A549 (cell line): ENCODE measurements at regions of chr9 and their contacts with region 1.

Region 1: DNA sequence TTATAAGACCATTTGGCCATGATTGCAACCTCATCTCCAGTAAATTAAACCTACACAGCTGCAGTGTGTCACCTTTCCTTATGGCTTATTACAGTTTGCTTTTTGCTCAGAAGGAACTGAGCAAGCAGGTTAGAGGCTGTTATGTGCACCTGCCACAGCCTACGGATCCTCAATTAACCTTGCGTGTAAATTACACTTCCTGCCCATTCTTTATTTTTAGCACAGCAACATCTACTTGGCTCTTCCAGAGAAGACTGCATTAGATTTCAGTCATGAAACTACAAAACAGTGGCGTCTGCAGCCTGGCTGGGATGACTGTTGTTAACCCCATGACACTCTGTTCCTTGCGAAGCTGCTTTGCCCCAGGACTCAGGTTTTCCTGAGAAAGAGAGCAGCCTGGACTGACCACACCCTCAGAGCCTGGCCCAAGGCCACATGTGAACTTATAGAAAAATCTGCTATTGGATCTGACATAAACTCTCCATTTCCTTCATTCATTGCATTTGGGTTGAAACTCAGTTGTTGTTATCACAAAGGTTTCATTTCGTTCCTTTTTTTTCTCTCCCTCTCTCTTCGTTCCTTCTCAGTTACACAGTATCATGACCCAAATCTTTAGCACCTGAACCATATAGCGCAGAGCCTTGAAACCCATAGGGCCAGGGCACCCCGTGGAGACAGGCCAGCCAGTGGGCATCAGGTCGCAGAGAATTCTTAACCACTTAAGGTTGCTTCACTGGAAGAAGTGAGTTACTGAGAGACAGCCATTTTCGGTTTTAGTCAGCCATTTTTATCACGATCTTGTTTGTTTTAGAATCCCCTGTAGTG is 138.6 kb downstream of the PALM2AKAP2 start:
- DNase-seq: no peak
- ATAC-seq: 0 out of 6 replicates have a peak, but pooled peaks of 1 of the 2 experiments have one; percentile 30
- H3K4me3 ChIP-seq: no peak overlapping the region
- H3K27ac ChIP-seq: no peak overlapping the region
- H3K4me1 ChIP-seq: no peaks in the 10 kb centered on the region
- CTCF ChIP-seq: no peak
- EP300 ChIP-seq: no peak
- POLR2A ChIP-seq: no peak
- RAD21 ChIP-seq: no peak

Region 2: DNA sequence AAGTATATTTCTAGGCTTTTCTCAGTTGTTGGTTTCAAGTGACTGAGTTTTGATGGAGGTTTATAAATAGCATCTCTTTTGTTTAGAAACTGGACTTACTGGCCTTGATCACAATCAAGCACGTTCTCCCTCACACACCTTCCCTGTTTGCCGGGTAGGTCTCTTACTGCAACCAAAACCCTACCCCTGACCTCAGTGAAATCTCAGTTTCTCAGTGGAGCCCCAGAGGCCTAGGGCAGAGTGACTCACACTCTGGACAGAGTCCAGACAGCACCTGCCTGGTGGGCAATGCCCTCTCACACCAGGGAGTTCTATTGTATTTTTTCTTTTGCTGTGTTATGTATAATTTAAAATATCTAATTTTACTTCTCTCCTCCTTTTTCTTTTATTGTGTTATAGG is 549.3 kb before region 1 on chr9:
- CTCF ChIA-PET with region 1: no interaction called
- POLR2A ChIA-PET with region 1: no interaction called
- DNase-seq: no peak
- ATAC-seq: no peak
- H3K4me3 ChIP-seq: no peak overlapping the region
- H3K27ac ChIP-seq: no peak overlapping the region
- H3K4me1 ChIP-seq: no peaks in the 10 kb centered on the region
- CTCF ChIP-seq: no peak
- EP300 ChIP-seq: no peak
- POLR2A ChIP-seq: no peak
- RAD21 ChIP-seq: no peak

Region 3: DNA sequence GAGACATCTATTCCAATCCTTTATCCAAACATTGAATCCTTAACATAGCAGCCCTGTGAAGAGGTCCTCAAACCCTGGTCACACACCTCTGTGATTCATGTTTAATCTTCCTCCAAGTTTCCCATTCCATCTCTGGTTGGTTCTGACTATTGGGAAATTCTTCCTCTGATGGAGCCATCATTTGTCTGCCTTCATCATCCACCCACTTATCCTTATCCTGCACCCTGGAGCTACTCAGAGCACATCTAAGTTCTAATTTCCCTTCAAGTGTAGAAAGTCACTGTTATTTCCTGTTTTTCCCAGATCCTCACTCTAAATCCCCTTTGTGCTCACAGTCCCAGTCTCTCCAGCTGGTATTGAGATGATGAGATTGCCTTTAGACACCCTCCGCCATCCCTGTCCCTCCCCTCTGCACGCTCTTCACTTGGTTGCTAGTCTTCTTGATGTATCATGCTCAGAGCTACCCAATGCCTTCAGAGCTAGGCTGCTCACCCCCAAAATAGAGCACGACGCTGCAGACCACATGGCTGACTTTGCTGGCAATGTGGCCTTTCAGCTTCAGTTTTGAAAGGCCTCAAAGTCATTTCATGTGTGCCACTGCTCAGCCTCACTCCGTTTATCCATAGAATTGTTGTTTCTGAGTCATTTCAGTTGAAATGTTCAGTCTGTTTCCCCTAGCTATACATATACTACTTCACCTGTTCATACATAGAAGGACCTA is 15.7 kb after region 1 on chr9:
- CTCF ChIA-PET with region 1: no interaction called
- POLR2A ChIA-PET with region 1: interaction called, 10 read pairs
- DNase-seq: no peak
- ATAC-seq: no peak
- H3K4me3 ChIP-seq: no peak overlapping the region
- H3K27ac ChIP-seq: no peak overlapping the region
- H3K4me1 ChIP-seq: no peaks in the 10 kb centered on the region
- CTCF ChIP-seq: no peak
- EP300 ChIP-seq: no peak
- POLR2A ChIP-seq: no peak
- RAD21 ChIP-seq: no peak